ENCODE measurements at regions of chr4 and their contacts with region 1.

Region 1: DNA sequence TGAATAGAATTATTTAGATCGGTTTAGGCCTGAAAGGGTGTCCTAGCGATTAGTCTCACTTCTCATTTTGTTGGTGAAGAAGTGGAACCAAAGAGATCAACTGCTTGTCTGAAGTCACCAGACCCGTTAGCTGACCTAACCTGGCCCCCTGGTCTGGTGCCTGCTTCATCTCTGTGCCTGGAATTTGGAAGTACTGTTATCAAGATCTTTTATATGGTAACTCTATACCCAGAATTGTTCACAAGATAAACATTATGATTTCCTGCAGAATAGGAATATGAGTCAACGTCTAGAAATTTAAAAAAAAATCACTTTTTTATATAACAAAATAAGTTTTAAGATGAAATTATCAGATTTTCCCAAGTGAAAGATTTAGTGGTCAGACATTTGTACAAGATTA is 37.2 kb downstream of the LRP2BP start:
- DNase-seq: peak in 1 of 2 donors; percentile 79
- H3K4me3 ChIP-seq: no peak overlapping the region
- H3K27ac ChIP-seq: peak overlapping the region; percentile 84 to 90
- H3K4me1 ChIP-seq: peaks cover 4 to 48% of the 10 kb centered on the region in 2 donors
- H3K27me3 ChIP-seq: no peaks in the 10 kb centered on the region
- CTCF ChIP-seq: no peak

Region 2: GRCh38 chr4:185343726-185344581 is 14.6 kb before region 1 on chr4:
- intact Hi-C with region 1: loop called (anchors 2 kb)
- DNase-seq: peak in 1 of 2 donors; percentile 65
- H3K4me3 ChIP-seq: peak overlapping the region in 1 of 2 donors; percentile 37
- H3K27ac ChIP-seq: peak overlapping the region; percentile 68 to 85
- H3K4me1 ChIP-seq: peaks cover 5 to 9% of the 10 kb centered on the region in 2 donors
- H3K27me3 ChIP-seq: no peaks in the 10 kb centered on the region
- CTCF ChIP-seq: no peak

Region 3: GRCh38 chr4:186297013-186297645 is 938.6 kb after region 1 on chr4:
- intact Hi-C with region 1: no loop called
- DNase-seq: no peak
- H3K4me3 ChIP-seq: no peak overlapping the region
- H3K27ac ChIP-seq: no peak overlapping the region
- H3K4me1 ChIP-seq: no peaks in the 10 kb centered on the region
- H3K27me3 ChIP-seq: no peaks in the 10 kb centered on the region
- CTCF ChIP-seq: peak; percentile 20 to 58 (median 39)

Measured in ascending aorta (tissue), 2 donors.